OCI-LY7 (cell line): ENCODE measurements at regions of chr20 and their contacts with region 1.

Region 1: GRCh38 chr20:57498425-57499400 is 26.2 kb downstream of the CTCFL start:
- DNase-seq: peak; percentile 70
- H3K4me3 ChIP-seq: no peak overlapping the region
- H3K27ac ChIP-seq: peak overlapping the region; percentile 14
- H3K4me1 ChIP-seq: peaks cover 41% of the 10 kb centered on the region
- CTCF ChIP-seq: peak; percentile 75

Region 2: GRCh38 chr20:57383447-57384347 is 115.0 kb before region 1 on chr20:
- CTCF ChIA-PET with region 1: interaction called, 4 read pairs
- POLR2A ChIA-PET with region 1: interaction called, 4 read pairs
- intact Hi-C with region 1: loop called (anchors 1 kb)
- DNase-seq: peak; percentile 58
- H3K4me3 ChIP-seq: peak overlapping the region; percentile 12
- H3K27ac ChIP-seq: peak overlapping the region; percentile 18
- H3K4me1 ChIP-seq: peaks cover 34% of the 10 kb centered on the region
- CTCF ChIP-seq: peak; percentile 64; the same call in 1 of the 2 replicates

Region 3: DNA sequence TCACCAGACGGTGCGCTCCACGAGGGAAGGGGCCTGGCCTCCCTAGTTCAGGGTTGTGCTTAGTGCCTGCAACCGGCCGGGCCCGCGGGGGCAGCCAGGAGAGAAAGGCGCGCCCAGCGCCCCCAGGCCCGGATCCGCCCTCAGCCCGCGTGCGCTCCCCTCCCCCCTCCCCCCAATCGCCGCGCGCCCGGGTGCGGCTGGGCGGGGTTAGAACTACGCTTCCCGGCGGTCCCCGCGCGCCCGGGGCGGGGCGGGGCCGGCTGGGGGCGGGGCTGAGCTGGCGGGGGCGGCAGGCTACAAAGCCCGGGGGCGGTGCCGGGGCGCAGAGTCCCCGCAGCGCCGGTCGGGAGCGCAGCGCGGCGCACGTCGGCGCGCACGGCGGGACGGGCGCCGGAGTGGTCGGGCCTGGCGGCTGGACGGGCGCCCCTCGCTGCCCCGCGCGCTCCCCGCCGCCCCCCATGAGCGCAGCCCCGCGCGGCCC is 107.6 kb before region 1 on chr20 and contains the start of gene RBM38:
- CTCF ChIA-PET with region 1: interaction called, 3 read pairs
- POLR2A ChIA-PET with region 1: interaction called, 9 read pairs
- intact Hi-C with region 1: loop called (anchors 2 kb)
- DNase-seq: peak; percentile 87
- H3K4me3 ChIP-seq: peak within 1 kb of the TSS; percentile 99
- H3K27ac ChIP-seq: peak within 1 kb of the TSS; percentile 97
- H3K4me1 ChIP-seq: peaks cover 61% of the 10 kb centered on the region
- CTCF ChIP-seq: no peak
- total RNA-seq, gene RBM38: 136 and 174 TPM in 2 replicates

Region 4: GRCh38 chr20:57398231-57398821 is 100.4 kb before region 1 on chr20:
- CTCF ChIA-PET with region 1: no interaction called
- POLR2A ChIA-PET with region 1: no interaction called
- intact Hi-C with region 1: loop called (anchors 2 kb)
- DNase-seq: peak; percentile 97
- H3K4me3 ChIP-seq: peak overlapping the region; percentile 99
- H3K27ac ChIP-seq: peak overlapping the region; percentile 97
- H3K4me1 ChIP-seq: peaks cover 88% of the 10 kb centered on the region
- CTCF ChIP-seq: 0 out of 2 replicates have a peak, but pooled peaks have one; percentile 33